Endothelial cell of umbilical vein (primary cell): ENCODE measurements at regions of chr19 and their contacts with region 1.

Region 1: GRCh38 chr19:41327576-41328156 is 17.7 kb downstream of the CCDC97 start:
- DNase-seq: peak; percentile 88
- H3K4me3 ChIP-seq: peak overlapping the region in 1 of 3 experiments; percentile 1
- H3K27ac ChIP-seq: peak overlapping the region; percentile 100
- H3K4me1 ChIP-seq: peaks cover 61% of the 10 kb centered on the region
- H3K27me3 ChIP-seq: no peaks in the 10 kb centered on the region
- CTCF ChIP-seq: no peak
- POLR2A ChIP-seq: no peak

Region 2: DNA sequence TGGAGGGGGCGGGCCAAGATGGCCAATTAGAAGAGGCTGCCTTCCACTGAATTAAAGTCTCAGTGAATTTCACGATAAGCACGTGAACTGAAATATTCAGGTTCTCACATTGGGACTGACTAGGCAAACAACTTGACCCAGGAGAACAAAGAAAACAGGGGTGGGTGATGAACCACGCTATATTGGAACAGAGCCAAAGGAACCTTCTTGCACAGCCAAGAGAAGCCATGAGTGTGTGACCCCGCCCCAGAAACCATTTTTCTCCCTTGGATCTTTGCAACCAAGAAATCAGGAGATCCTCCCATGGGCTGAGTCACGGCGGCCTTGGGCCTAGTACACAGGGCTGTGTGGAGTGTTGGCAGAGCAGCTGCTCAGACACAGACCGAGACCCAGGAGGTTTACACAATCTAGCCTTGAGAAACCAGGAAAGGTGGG is 152.1 kb after region 1 on chr19:
- CTCF ChIA-PET with region 1: no interaction called
- POLR2A ChIA-PET with region 1: no interaction called
- dilution Hi-C with region 1: no loop called
- intact Hi-C with region 1: loop called (anchors 1 kb)
- DNase-seq: peak; percentile 98
- H3K4me3 ChIP-seq: peak overlapping the region in 2 of 3 experiments; percentile 56 to 98
- H3K27ac ChIP-seq: peak overlapping the region; percentile 97
- H3K4me1 ChIP-seq: peaks cover 37% of the 10 kb centered on the region
- H3K27me3 ChIP-seq: peaks cover under 1 to 3% of the 10 kb centered on the region in 2 experiments
- CTCF ChIP-seq: no peak
- POLR2A ChIP-seq: peak; percentile 96